ENCODE measurements at regions of chr10 and their contacts with region 1.

Region 1: DNA sequence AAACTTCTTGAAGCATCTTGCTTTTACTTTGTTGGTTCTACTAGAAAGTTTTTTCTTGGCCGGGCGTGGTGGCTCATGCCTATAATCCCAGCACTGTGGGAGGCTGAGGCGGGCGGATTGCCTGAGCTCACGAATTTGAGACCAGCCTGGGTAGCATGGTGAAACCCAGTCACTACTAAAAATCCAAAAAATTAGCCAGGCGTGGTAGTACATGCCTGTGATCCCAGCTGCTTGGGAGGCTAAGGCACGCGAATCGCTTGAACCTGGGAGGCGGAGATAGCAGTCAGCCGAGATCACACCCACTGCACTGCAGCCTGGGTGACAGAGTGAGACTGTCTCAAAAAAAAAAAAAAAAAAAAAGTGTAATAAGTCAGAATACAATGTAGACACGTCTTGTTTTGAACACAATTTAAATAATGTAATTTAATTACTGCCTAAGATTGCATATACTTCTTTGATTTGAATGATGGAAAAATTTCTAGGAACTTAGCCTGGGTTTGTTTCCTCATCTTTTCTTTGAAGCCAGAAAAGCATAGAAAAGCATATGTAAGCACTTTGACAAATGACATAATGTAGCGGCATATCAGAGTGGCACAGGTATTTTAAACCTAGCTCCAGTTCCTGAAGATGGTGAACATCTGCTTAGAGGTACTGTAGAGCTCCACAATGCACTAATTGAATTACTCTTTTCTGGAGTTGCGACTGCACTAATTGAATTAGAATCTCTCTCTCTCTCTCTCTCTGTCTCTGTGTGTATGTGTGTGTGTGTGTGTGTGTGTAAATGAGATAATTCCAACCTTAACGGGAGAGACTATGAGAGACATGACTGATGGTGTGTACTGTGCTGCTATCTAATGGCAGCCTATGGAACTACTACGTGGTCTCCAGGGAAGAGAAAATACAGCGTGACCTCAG is 87.8 kb downstream of the BTRC start:
- DNase-seq: peak; percentile 63
- ATAC-seq: peak; percentile 86
- H3K4me3 ChIP-seq: no peak overlapping the region
- H3K27ac ChIP-seq: no peak overlapping the region
- H3K4me1 ChIP-seq: no peaks in the 10 kb centered on the region
- H3K27me3 ChIP-seq: no peaks in the 10 kb centered on the region
- CTCF ChIP-seq: peak; percentile 67

Region 2: GRCh38 chr10:101353692-101354327 is 88.0 kb before region 1 on chr10 and contains the start of gene BTRC:
- CTCF ChIA-PET with region 1: no interaction called
- POLR2A ChIA-PET with region 1: no interaction called
- intact Hi-C with region 1: loop called (anchors 5 kb)
- DNase-seq: peak; percentile 98
- ATAC-seq: peak; percentile 96
- H3K4me3 ChIP-seq: peak within 1 kb of the TSS; percentile 91
- H3K27ac ChIP-seq: 0 out of 2 replicates have a peak within 1 kb of the TSS, but pooled peaks have one; percentile 28
- H3K4me1 ChIP-seq: peaks cover 17% of the 10 kb centered on the region
- H3K27me3 ChIP-seq: no peaks in the 10 kb centered on the region
- CTCF ChIP-seq: no peak
- total RNA-seq, gene BTRC: 4.4 and 5.7 TPM in 2 replicates

Region 3: GRCh38 chr10:101405001-101405400 is 36.8 kb before region 1 on chr10:
- CTCF ChIA-PET with region 1: no interaction called
- POLR2A ChIA-PET with region 1: no interaction called
- intact Hi-C with region 1: no loop called
- DNase-seq: no peak
- ATAC-seq: no peak
- H3K4me3 ChIP-seq: no peak overlapping the region
- H3K27ac ChIP-seq: no peak overlapping the region
- H3K4me1 ChIP-seq: no peaks in the 10 kb centered on the region
- H3K27me3 ChIP-seq: no peaks in the 10 kb centered on the region
- CTCF ChIP-seq: no peak

Region 4: GRCh38 chr10:101485681-101486554 is 44.1 kb after region 1 on chr10:
- CTCF ChIA-PET with region 1: interaction called, 10 read pairs
- POLR2A ChIA-PET with region 1: no interaction called
- intact Hi-C with region 1: no loop called
- DNase-seq: no peak
- ATAC-seq: no peak
- H3K4me3 ChIP-seq: no peak overlapping the region
- H3K27ac ChIP-seq: no peak overlapping the region
- H3K4me1 ChIP-seq: 0 out of 2 replicates have a peak, but pooled peaks cover 4% of the 10 kb centered on the region
- H3K27me3 ChIP-seq: no peaks in the 10 kb centered on the region
- CTCF ChIP-seq: no peak

Region 5: GRCh38 chr10:101629837-101630632 is 188.2 kb after region 1 on chr10:
- CTCF ChIA-PET with region 1: no interaction called
- POLR2A ChIA-PET with region 1: no interaction called
- intact Hi-C with region 1: no loop called
- DNase-seq: no peak
- ATAC-seq: no peak
- H3K4me3 ChIP-seq: no peak overlapping the region
- H3K27ac ChIP-seq: no peak overlapping the region
- H3K4me1 ChIP-seq: no peaks in the 10 kb centered on the region
- H3K27me3 ChIP-seq: no peaks in the 10 kb centered on the region
- CTCF ChIP-seq: no peak

Measured in PC-3 (cell line).